Posterior vena cava (tissue), 2 donors: ENCODE measurements at regions of chr9 and their contacts with region 1.

Region 1: GRCh38 chr9:38154501-38155421 is 85.7 kb upstream of the SHB start:
- DNase-seq: no peak

Region 2: GRCh38 chr9:37920471-37921167 is 234.1 kb before region 1 on chr9:
- intact Hi-C with region 1: loop called (anchors 10 kb)
- DNase-seq: peak; percentile 51